ENCODE measurements at regions of chr3 and their contacts with region 1.

Region 1: GRCh38 chr3:41907330-41908073 is 54.4 kb downstream of the ULK4 start:
- DNase-seq: no peak
- H3K4me3 ChIP-seq: no peak overlapping the region
- H3K27ac ChIP-seq: no peak overlapping the region
- H3K4me1 ChIP-seq: no peaks in the 10 kb centered on the region
- H3K27me3 ChIP-seq: no peaks in the 10 kb centered on the region
- CTCF ChIP-seq: no peak
- POLR2A ChIP-seq: no peak

Region 2: GRCh38 chr3:41974223-41974622 is 66.7 kb after region 1 on chr3:
- intact Hi-C with region 1: no loop called
- DNase-seq: no peak
- H3K4me3 ChIP-seq: no peak overlapping the region
- H3K27ac ChIP-seq: no peak overlapping the region
- H3K4me1 ChIP-seq: no peaks in the 10 kb centered on the region
- H3K27me3 ChIP-seq: no peaks in the 10 kb centered on the region
- CTCF ChIP-seq: no peak
- POLR2A ChIP-seq: no peak

Region 3: GRCh38 chr3:42229942-42230688 is 322.6 kb after region 1 on chr3:
- intact Hi-C with region 1: loop called (anchors 5 kb)
- DNase-seq: no peak
- H3K4me3 ChIP-seq: peak overlapping the region in 1 of 3 donors; percentile 43
- H3K27ac ChIP-seq: no peak overlapping the region
- H3K4me1 ChIP-seq: no peaks in the 10 kb centered on the region
- H3K27me3 ChIP-seq: no peaks in the 10 kb centered on the region
- CTCF ChIP-seq: peak in 1 of 3 donors; percentile 55
- POLR2A ChIP-seq: no peak